T-cell (primary cell): ENCODE measurements at regions of chr6 and their contacts with region 1.

Region 1: GRCh38 chr6:33508935-33509926 is 54.9 kb downstream of the ZBTB9 start:
- DNase-seq: no peak
- ATAC-seq: no peak
- H3K4me3 ChIP-seq: no peak overlapping the region
- H3K4me3 Mint-ChIP-seq: no peak overlapping the region
- H3K27ac ChIP-seq: no peak overlapping the region
- H3K27ac Mint-ChIP-seq: no peak overlapping the region
- H3K4me1 ChIP-seq: peaks cover 0 to 8% of the 10 kb centered on the region in 2 experiments
- H3K4me1 Mint-ChIP-seq: peaks cover 7 to 19% (median 11%) of the 10 kb centered on the region in 3 donors
- H3K27me3 ChIP-seq: peaks cover 0 to 22% of the 10 kb centered on the region in 2 experiments
- H3K27me3 Mint-ChIP-seq: peaks cover 11 to 12% of the 10 kb centered on the region in 2 donors

Region 2: GRCh38 chr6:33288921-33289748 is 220.1 kb before region 1 on chr6 and contains the starts of genes PFDN6 and WDR46:
- CTCF ChIA-PET with region 1: no interaction called
- POLR2A ChIA-PET with region 1: no interaction called
- DNase-seq: peak; percentile 67 to 90 (median 82)
- ATAC-seq: peak; percentile 95 to 96 (median 96)
- H3K4me3 ChIP-seq: peak within 1 kb of the TSS; percentile 82 to 97
- H3K4me3 Mint-ChIP-seq: peak within 1 kb of the TSS; percentile 93 to 96 (median 96)
- H3K27ac ChIP-seq: peak within 1 kb of the TSS; percentile 65
- H3K27ac Mint-ChIP-seq: peak within 1 kb of the TSS; percentile 92 to 96
- H3K4me1 ChIP-seq: peaks cover 13 to 33% of the 10 kb centered on the region in 2 experiments
- H3K4me1 Mint-ChIP-seq: peaks cover 44 to 50% (median 49%) of the 10 kb centered on the region in 3 donors
- H3K27me3 ChIP-seq: no peaks in the 10 kb centered on the region
- H3K27me3 Mint-ChIP-seq: no peaks in the 10 kb centered on the region
- total RNA-seq, gene PFDN6: 16.1 to 51.4 (median 40.5) TPM
- total RNA-seq, gene WDR46: 38.3 to 74.4 (median 60.4) TPM

Region 3: GRCh38 chr6:33477864-33478263 is 31.4 kb before region 1 on chr6:
- CTCF ChIA-PET with region 1: no interaction called
- POLR2A ChIA-PET with region 1: interaction called in 1 of 2 experiments, 10 read pairs
- DNase-seq: no peak
- ATAC-seq: no peak
- H3K4me3 ChIP-seq: no peak overlapping the region
- H3K4me3 Mint-ChIP-seq: no peak overlapping the region
- H3K27ac ChIP-seq: no peak overlapping the region
- H3K27ac Mint-ChIP-seq: no peak overlapping the region
- H3K4me1 ChIP-seq: no peaks in the 10 kb centered on the region
- H3K4me1 Mint-ChIP-seq: no peaks in the 10 kb centered on the region
- H3K27me3 ChIP-seq: peaks cover 0 to 7% of the 10 kb centered on the region in 2 experiments
- H3K27me3 Mint-ChIP-seq: peaks cover 0 to 4% of the 10 kb centered on the region in 2 donors

Region 4: GRCh38 chr6:33497157-33497556 is 12.1 kb before region 1 on chr6:
- CTCF ChIA-PET with region 1: no interaction called
- POLR2A ChIA-PET with region 1: no interaction called
- DNase-seq: no peak
- ATAC-seq: no peak
- H3K4me3 ChIP-seq: no peak overlapping the region
- H3K4me3 Mint-ChIP-seq: no peak overlapping the region
- H3K27ac ChIP-seq: no peak overlapping the region
- H3K27ac Mint-ChIP-seq: no peak overlapping the region
- H3K4me1 ChIP-seq: no peaks in the 10 kb centered on the region
- H3K4me1 Mint-ChIP-seq: peaks cover 0 to under 1% (median 0%) of the 10 kb centered on the region in 3 donors
- H3K27me3 ChIP-seq: peaks cover 0 to 12% of the 10 kb centered on the region in 2 experiments
- H3K27me3 Mint-ChIP-seq: no peaks in the 10 kb centered on the region

Region 5: DNA sequence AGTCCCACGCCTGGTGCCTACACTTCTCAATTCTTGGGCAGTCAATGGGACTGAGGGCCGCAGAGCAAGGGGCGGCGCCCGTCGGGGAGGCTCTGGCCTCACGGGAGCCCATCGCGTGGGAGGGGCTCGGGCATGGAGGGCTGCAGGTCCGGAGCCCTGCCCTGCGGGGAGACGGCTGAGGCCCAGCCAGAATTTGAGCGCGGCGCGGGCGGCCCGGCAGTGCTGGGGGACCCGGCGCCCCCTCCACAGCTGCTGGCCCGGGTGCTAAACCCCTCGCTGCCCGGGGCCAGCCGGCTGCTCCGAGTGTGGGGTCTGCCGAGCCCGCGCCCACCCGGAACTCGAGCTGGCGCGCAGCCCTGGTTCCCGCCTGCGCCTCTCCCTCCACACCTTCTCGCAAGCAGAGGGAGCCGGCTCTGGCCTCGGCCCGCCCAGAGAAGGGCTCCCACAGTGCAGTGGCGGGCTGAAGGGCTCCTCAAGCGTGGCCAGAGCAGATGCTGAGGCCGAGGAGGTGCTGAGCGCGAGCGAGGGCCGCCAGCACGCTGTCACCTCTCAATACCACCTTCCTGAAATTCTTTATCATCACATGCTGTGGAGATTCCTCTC is 12.4 kb after region 1 on chr6:
- CTCF ChIA-PET with region 1: no interaction called
- POLR2A ChIA-PET with region 1: interaction called in 1 of 2 experiments, 11 read pairs
- DNase-seq: no peak
- ATAC-seq: no peak
- H3K4me3 ChIP-seq: no peak overlapping the region
- H3K4me3 Mint-ChIP-seq: no peak overlapping the region
- H3K27ac ChIP-seq: no peak overlapping the region
- H3K27ac Mint-ChIP-seq: no peak overlapping the region
- H3K4me1 ChIP-seq: no peaks in the 10 kb centered on the region
- H3K4me1 Mint-ChIP-seq: no peaks in the 10 kb centered on the region
- H3K27me3 ChIP-seq: no peaks in the 10 kb centered on the region
- H3K27me3 Mint-ChIP-seq: peaks cover 0 to 3% of the 10 kb centered on the region in 2 donors

Region 6: GRCh38 chr6:33579828-33580714 is 70.8 kb after region 1 on chr6 and contains the start of gene BAK1:
- CTCF ChIA-PET with region 1: no interaction called
- POLR2A ChIA-PET with region 1: no interaction called
- DNase-seq: peak; percentile 62 to 89 (median 78)
- ATAC-seq: peak; percentile 96 to 97 (median 96)
- H3K4me3 ChIP-seq: peak within 1 kb of the TSS; percentile 79 to 94
- H3K4me3 Mint-ChIP-seq: peak within 1 kb of the TSS; percentile 93 to 98 (median 97)
- H3K27ac ChIP-seq: peak within 1 kb of the TSS; percentile 69
- H3K27ac Mint-ChIP-seq: peak within 1 kb of the TSS; percentile 98 to 100
- H3K4me1 ChIP-seq: peaks cover 15 to 51% of the 10 kb centered on the region in 2 experiments
- H3K4me1 Mint-ChIP-seq: peaks cover 28 to 41% (median 32%) of the 10 kb centered on the region in 3 donors
- H3K27me3 ChIP-seq: no peaks in the 10 kb centered on the region
- H3K27me3 Mint-ChIP-seq: no peaks in the 10 kb centered on the region
- total RNA-seq, gene BAK1: 22.9 to 31.6 (median 27.9) TPM